Right cardiac atrium (tissue), 5 donors: ENCODE measurements at regions of chr1 and their contacts with region 1.

Region 1: GRCh38 chr1:162502928-162503327 is 5.3 kb downstream of the UHMK1 start:
- DNase-seq: no peak
- ATAC-seq: no peak
- H3K4me3 ChIP-seq: no peak overlapping the region
- H3K27ac ChIP-seq: no peak overlapping the region
- H3K4me1 ChIP-seq: peaks cover 3% of the 10 kb centered on the region
- H3K27me3 ChIP-seq: no peaks in the 10 kb centered on the region

Region 2: DNA sequence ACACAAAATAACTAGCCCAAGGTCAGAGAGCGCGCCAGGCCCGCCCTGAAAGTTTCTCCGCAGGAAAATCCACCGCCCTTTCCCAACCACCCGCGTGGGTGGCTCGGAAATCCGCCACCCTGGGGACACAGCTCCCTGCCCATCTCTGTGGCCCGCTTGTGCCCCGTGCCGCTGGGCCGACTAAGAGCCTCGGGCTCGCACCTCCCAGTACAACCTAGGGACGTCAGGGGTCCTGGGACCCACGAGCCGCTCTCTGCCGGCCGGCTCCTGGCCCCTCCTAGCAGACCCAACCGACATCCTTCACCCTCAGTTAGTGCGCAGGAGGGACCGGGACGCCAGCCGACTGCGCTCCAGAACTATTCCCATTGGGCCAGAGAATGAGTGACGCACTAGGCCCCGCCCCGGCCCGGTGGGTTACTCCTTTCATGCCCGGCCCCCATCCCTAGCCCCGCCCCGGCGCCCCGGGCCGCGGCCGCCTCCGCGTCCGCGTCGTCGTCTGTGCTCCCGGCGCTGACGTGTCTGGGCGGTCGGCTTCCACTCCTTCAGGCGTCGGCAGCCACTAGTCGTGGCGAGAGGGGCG is 58.2 kb after region 1 on chr1:
- intact Hi-C with region 1: loop called in 1 of 4 experiments (anchors 10 kb)
- DNase-seq: peak; percentile 99 to 100 (median 100)
- ATAC-seq: peak; percentile 97 to 98
- H3K4me3 ChIP-seq: peak overlapping the region; percentile 53
- H3K27ac ChIP-seq: peak overlapping the region; percentile 93
- H3K4me1 ChIP-seq: peaks cover 2% of the 10 kb centered on the region
- H3K27me3 ChIP-seq: no peaks in the 10 kb centered on the region

Region 3: GRCh38 chr1:162873671-162874666 is 371.0 kb after region 1 on chr1:
- intact Hi-C with region 1: no loop called
- DNase-seq: no peak
- ATAC-seq: no peak
- H3K4me3 ChIP-seq: no peak overlapping the region
- H3K27ac ChIP-seq: no peak overlapping the region
- H3K4me1 ChIP-seq: no peaks in the 10 kb centered on the region
- H3K27me3 ChIP-seq: no peaks in the 10 kb centered on the region